Activated CD8-positive, alpha-beta memory T cell treated with anti-CD3 and anti-CD28 coated beads, Interleukin-2, amount 10 ng/mL, durations not matched to agents 7 days and 5 days (primary cell): ENCODE measurements at regions of chr1 and their contacts with region 1.

Region 1: GRCh38 chr1:25642574-25643108 is 26.1 kb downstream of the MAN1C1 start:
- DNase-seq: peak; percentile 92
- ATAC-seq: peak; percentile 91
- H3K4me3 Mint-ChIP-seq: peak overlapping the region; percentile 38
- H3K27ac Mint-ChIP-seq: peak overlapping the region; percentile 80
- H3K4me1 Mint-ChIP-seq: peaks cover 36% of the 10 kb centered on the region
- H3K27me3 Mint-ChIP-seq: peaks cover 78% of the 10 kb centered on the region

Region 2: GRCh38 chr1:25616095-25616986 is 26.3 kb before region 1 on chr1 and contains the start of gene MAN1C1:
- CTCF ChIA-PET with region 1: interaction called, 24 read pairs
- DNase-seq: peak; percentile 81
- ATAC-seq: peak; percentile 79
- H3K4me3 Mint-ChIP-seq: peak within 1 kb of the TSS; percentile 76
- H3K27ac Mint-ChIP-seq: peak within 1 kb of the TSS; percentile 34
- H3K4me1 Mint-ChIP-seq: peaks cover 52% of the 10 kb centered on the region
- H3K27me3 Mint-ChIP-seq: peaks cover 65% of the 10 kb centered on the region
- total RNA-seq, gene MAN1C1: 15.5 to 20.0 TPM

Region 3: GRCh38 chr1:25624156-25624555 is 18.5 kb before region 1 on chr1:
- CTCF ChIA-PET with region 1: interaction called, 24 read pairs
- DNase-seq: peak; percentile 83
- ATAC-seq: no peak
- H3K4me3 Mint-ChIP-seq: no peak overlapping the region
- H3K27ac Mint-ChIP-seq: peak overlapping the region; percentile 12
- H3K4me1 Mint-ChIP-seq: peaks cover 66% of the 10 kb centered on the region
- H3K27me3 Mint-ChIP-seq: peaks cover 57% of the 10 kb centered on the region

Region 4: DNA sequence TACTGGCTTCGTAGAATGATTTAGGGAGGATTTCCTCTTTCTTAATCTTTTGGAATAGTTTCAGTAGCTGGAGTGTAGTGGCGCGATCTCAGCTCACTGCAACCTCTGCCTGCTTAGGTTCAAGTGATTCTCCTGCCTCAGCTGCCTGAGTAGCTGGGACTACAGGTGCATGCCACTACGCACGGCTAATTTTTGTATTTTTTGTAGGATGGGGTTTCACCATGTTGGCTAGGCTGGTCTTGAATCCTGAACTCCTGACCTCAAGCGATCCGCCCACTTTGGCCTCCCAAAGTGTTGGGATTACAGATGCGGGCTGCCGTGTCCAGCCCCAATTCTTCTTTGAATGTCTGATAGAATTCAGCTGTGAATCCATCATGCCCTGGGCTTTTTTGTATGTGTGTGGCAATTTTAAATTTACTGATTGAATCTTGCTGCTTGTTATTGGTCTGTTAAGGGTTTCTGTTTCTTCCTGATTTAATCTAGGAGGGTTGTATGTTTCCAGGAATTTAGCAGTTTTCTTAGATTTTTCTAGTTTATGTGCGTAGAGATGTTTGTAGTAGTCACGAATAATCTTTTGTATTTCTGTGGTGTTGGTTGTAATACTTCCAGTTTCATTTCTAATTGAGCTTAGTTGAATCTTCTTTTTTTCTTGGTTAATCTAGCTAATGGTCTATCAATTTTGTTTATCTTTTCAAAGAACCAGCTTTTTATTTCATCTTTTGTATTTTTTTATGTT is 10.7 kb before region 1 on chr1:
- CTCF ChIA-PET with region 1: interaction called, 12 read pairs
- DNase-seq: peak; percentile 36
- ATAC-seq: peak; percentile 66
- H3K4me3 Mint-ChIP-seq: peak overlapping the region; percentile 74
- H3K27ac Mint-ChIP-seq: peak overlapping the region; percentile 84
- H3K4me1 Mint-ChIP-seq: peaks cover 54% of the 10 kb centered on the region
- H3K27me3 Mint-ChIP-seq: peaks cover 17% of the 10 kb centered on the region

Region 5: GRCh38 chr1:25675729-25676476 is 33.3 kb after region 1 on chr1:
- CTCF ChIA-PET with region 1: interaction called, 11 read pairs
- DNase-seq: peak; percentile 97
- ATAC-seq: peak; percentile 90
- H3K4me3 Mint-ChIP-seq: peak overlapping the region; percentile 52
- H3K27ac Mint-ChIP-seq: peak overlapping the region; percentile 64
- H3K4me1 Mint-ChIP-seq: peaks cover 50% of the 10 kb centered on the region
- H3K27me3 Mint-ChIP-seq: peaks cover 82% of the 10 kb centered on the region